Transverse colon (tissue), 4 donors: ENCODE measurements at regions of chr9 and their contacts with region 1.

Region 1: DNA sequence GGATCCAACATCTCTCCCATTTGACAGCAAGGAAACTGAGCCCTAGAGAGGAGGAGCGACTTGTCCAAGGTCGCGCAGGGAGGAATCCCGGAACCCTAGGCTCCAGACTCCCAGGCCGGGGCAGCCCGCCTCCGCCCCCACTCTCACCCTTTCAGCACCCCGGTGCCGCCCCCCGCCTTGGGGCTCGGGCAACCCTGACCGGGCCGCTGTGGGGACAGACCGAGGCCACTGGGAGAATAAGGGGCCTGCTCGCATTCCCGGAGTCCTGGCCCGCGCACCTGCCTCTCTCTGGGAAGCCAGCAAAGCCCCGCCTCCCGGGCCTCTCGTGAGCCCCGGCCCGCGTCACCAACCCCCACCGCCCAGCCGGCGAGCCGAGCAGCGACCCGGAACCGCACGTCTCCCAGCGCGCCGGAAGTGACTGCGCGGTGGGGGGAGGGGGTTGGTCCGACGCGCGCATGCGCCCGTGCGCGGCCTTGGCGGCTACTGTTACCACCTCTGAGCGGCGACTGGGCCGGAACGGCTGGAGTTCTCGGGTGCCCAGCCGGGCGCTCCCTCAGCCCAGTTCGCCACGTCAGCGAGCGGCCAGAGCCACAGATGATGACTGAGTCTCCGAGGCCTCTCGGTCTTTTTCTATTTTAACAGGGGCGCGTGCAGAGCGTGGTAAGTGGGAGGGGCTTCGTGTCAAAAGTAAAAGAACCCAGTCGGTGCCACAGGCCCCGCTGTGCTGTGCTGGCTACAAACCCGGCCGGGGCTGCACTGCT is at the start of gene GOLGA1:
- DNase-seq: peak; percentile 98
- H3K4me3 ChIP-seq: peak within 1 kb of the TSS; percentile 59 to 87 (median 66)
- H3K27ac ChIP-seq: peak within 1 kb of the TSS; percentile 92 to 98 (median 95)
- H3K4me1 ChIP-seq: peaks cover 0 to 19% (median 9%) of the 10 kb centered on the region in 4 donors
- H3K27me3 ChIP-seq: no peaks in the 10 kb centered on the region
- CTCF ChIP-seq: no peak
- EP300 ChIP-seq: no peak
- POLR2A ChIP-seq: peak; percentile 95
- total RNA-seq, gene GOLGA1: 24.3 to 144 (median 30.1) TPM

Region 2: GRCh38 chr9:124906966-124907365 is 33.9 kb before region 1 on chr9:
- in situ Hi-C with region 1: no loop called
- intact Hi-C with region 1: no loop called
- DNase-seq: no peak
- H3K4me3 ChIP-seq: no peak overlapping the region
- H3K27ac ChIP-seq: no peak overlapping the region
- H3K4me1 ChIP-seq: peaks cover 0 to 11% (median 0%) of the 10 kb centered on the region in 4 donors
- H3K27me3 ChIP-seq: no peaks in the 10 kb centered on the region
- CTCF ChIP-seq: no peak
- EP300 ChIP-seq: no peak
- POLR2A ChIP-seq: no peak

Region 3: DNA sequence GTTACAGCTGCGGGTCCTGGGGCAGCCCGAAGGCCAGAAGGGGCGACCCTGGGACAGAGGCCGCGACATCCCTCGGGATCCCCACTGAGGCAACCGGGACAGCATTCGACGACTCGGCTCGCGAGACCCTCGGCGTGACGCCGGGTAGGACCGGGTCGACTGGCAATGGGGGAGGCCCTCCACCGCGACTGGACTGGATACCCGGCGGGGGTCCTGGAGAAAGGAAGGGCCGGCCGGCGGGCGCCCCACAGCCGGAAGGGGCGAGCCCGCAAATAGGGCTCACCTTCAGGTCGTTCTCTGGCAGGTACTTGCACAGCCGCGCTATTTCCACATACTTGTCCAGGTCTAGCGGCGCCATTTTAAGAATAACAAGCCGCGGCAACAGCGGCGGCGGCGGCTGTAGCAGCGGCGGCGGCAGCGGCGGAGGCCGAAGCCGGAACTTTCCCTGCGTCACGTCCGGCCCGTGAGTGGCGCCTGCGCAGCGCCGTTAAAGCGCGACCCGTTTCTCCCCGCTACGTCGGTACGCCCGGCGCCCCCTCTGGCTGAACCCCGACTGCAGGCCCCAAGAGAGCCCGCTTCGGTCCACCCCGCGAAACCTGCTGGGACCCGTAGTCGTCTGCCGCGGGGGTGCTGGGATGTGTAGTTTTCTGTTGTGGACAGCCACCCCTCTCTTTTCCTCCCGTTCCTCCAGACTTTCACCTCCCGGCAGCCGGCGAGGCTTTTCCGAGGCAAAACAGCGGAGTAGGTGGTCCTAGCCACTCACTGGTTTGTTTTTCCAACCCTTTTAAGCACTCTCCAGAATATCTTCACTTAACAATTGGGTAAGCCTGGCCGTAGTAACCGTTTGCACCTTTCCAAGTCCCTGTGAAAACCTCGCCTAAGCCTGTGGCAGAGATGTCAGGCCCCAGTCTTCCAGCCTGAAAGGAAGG is 248.8 kb after region 1 on chr9 and contains the start of gene PPP6C:
- in situ Hi-C with region 1: no loop called
- intact Hi-C with region 1: loop called (anchors 1 kb)
- DNase-seq: peak; percentile 98
- H3K4me3 ChIP-seq: peak within 1 kb of the TSS; percentile 87 to 100 (median 94)
- H3K27ac ChIP-seq: peak within 1 kb of the TSS; percentile 94 to 99 (median 96)
- H3K4me1 ChIP-seq: peaks cover 16 to 37% (median 22%) of the 10 kb centered on the region in 4 donors
- H3K27me3 ChIP-seq: no peaks in the 10 kb centered on the region
- CTCF ChIP-seq: peak; percentile 46 to 79 (median 63)
- EP300 ChIP-seq: no peak
- POLR2A ChIP-seq: peak; percentile 86
- total RNA-seq, gene PPP6C: 15.1 to 34.7 (median 29.9) TPM